ENCODE measurements at regions of chr16 and their contacts with region 1.

Region 1: DNA sequence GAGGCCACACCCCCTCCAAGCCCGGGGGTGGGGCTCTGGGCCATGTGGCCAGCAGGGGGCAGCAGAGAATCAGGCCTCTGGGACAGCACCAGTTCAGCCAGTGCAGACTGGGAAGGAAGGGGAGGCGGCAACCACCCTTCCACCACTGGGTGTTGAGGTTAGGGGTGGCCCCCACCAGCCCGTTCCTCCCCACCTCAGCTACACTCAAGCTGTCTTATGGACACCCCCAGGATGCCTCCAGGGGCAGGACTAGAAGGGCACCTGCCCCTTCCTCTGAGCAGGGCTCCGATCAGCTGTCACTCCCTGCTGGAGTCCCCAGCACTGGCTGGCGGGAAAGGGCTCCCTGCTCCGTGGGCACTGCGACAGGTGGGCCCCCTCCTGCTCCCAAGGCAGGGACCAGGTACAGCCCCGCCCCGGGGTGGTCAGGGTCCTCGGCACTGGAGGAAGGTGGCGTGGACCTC is 21.8 kb downstream of the KATNB1 start:
- DNase-seq: peak; percentile 91
- H3K4me3 Mint-ChIP-seq: no peak overlapping the region
- H3K27ac Mint-ChIP-seq: no peak overlapping the region
- H3K4me1 Mint-ChIP-seq: no peaks in the 10 kb centered on the region
- H3K27me3 Mint-ChIP-seq: no peaks in the 10 kb centered on the region

Region 2: DNA sequence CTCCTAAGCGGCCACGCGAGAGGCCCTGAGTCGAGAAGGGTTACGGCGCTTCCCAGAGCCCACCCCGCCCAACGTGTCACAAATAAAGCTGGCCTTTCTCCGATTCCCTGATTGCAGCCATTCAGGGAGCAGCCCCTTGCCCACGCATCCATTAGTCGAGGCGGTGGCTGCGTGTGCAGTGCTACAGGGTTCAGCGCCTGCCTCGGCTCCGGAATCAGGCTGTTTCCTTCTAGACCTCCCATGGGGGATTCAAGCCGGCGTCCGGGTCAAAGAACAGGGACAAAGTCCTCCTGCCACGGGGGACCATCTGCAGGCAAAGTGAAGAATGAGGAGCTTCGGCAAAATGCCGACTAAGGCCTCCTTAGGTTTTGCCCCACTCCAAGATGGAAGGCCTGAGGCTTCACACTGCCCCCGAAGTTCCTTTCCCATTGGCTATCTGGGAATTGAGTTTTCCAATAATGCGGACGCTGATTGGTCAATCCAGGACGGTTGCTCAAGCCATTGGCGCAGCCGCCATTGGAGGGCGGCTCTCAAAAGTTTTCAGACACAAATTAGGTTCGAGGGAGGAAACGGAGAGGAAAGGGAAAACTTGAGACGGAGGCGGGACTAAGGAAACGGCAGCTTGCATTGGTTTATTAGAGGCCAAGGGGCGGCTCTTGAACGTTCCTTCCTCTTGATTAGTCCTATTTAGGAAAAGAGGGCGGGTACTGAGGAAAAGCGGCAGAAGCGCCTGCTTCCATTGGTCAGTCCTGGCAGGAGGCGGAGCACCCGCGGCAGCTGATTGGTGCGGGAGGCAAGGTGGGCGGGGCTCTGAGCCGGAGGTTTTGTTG is 22.2 kb before region 1 on chr16:
- CTCF ChIA-PET with region 1: interaction called, 12 read pairs
- POLR2A ChIA-PET with region 1: no interaction called
- DNase-seq: peak; percentile 98
- H3K4me3 Mint-ChIP-seq: peak overlapping the region; percentile 93
- H3K27ac Mint-ChIP-seq: peak overlapping the region; percentile 81
- H3K4me1 Mint-ChIP-seq: peaks cover 30% of the 10 kb centered on the region
- H3K27me3 Mint-ChIP-seq: no peaks in the 10 kb centered on the region

Region 3: GRCh38 chr16:57775661-57776469 is 18.5 kb after region 1 on chr16:
- CTCF ChIA-PET with region 1: no interaction called
- POLR2A ChIA-PET with region 1: no interaction called
- DNase-seq: no peak
- H3K4me3 Mint-ChIP-seq: no peak overlapping the region
- H3K27ac Mint-ChIP-seq: no peak overlapping the region
- H3K4me1 Mint-ChIP-seq: no peaks in the 10 kb centered on the region
- H3K27me3 Mint-ChIP-seq: no peaks in the 10 kb centered on the region